Transverse colon (tissue), 4 donors: ENCODE measurements at regions of chr19 and their contacts with region 1.

Region 1: DNA sequence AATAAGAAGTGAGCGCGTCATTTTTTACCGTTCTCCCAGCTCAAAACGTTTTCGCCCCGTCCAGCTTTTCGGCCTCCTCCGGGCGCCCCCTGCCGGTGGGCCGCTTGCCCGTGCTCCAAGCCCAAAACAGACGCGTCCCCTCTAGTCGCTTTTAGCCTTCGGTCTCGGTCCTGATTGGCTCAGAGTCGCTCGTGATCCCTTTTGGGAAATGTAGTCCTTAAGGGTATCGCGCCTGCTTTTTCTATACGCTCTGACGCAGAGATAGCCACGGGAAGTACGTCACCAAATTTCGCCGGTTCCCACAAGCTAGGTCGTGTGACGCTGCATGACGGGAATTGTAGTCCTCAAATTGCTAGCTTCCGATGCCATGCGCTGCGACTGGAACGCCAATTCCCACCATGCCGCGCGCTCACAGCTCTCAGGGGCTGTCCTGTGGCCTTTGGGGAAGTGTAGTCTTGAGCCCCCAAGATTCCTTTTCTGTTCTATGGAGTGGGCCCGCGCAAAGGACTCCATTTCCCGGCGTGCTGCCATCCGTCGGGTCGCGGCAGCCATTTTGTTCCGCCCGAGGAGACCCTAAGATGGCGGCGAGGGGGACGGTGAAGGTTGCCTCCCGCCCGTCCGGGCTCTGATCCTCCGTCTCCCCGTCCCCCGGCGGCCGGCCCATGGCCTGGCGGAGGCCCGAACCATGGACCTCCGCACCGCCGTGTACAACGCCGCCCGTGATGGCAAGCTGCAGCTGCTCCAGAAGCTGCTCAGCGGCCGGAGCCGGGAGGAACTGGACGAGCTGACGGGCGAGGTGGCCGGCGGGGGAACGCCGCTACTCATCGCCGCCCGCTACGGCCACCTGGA is at the start of gene FEM1A:
- DNase-seq: peak; percentile 100
- H3K4me3 ChIP-seq: peak within 1 kb of the TSS; percentile 63 to 89 (median 85)
- H3K27ac ChIP-seq: peak within 1 kb of the TSS; percentile 84 to 94 (median 94)
- H3K4me1 ChIP-seq: peaks cover 13 to 39% (median 21%) of the 10 kb centered on the region in 4 donors
- H3K27me3 ChIP-seq: no peaks in the 10 kb centered on the region
- CTCF ChIP-seq: peak; percentile 97 to 100 (median 98)
- EP300 ChIP-seq: peak; percentile 91
- POLR2A ChIP-seq: peak; percentile 73
- total RNA-seq, gene FEM1A: 13.3 to 63.5 (median 15.5) TPM

Region 2: DNA sequence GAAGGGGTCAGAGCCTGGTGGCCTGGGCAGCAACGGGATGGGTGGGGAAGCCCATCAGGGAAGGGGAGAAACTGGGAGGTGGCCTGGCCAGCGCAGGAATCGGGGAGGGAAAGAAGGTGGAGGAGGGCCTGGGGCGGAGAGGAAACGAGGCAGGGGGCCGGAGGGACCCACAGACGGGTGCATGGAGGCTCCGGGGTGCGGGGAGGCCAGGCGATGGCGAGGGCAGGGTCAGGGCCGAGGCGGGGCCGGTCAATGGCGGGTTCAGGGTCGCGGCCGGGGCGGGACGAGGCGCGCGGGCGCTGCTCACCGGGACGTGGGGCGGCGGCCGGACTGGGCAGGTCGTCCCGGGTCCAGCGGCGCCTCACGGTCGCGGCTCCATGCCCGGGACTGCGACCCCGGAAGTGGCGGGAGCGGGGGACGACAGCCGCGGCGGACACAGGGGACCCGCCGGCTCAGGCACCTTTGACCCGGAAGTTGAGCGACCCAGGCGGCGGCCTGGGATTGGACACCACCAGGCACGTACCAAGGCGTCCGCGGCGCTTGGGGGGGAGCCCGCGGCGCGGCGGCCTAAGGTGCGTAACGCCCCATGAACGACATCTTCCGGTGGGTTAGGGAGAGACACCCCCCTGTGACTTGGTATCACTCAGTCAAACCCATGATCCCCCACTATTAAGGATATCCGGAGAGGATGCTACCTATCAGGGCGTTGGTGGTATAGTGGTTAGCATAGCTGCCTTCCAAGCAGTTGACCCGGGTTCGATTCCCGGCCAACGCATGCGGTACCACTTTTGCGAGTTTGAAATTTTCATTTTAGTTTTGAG is 67.8 kb before region 1 on chr19 and contains the start of gene DPP9:
- in situ Hi-C with region 1: loop called in 1 of 4 experiments (anchors 10 kb)
- intact Hi-C with region 1: no loop called
- DNase-seq: peak; percentile 97
- H3K4me3 ChIP-seq: peak within 1 kb of the TSS; percentile 93 to 99 (median 96)
- H3K27ac ChIP-seq: peak within 1 kb of the TSS; percentile 89 to 97 (median 94)
- H3K4me1 ChIP-seq: peaks cover 13 to 31% (median 20%) of the 10 kb centered on the region in 4 donors
- H3K27me3 ChIP-seq: no peaks in the 10 kb centered on the region
- CTCF ChIP-seq: peak in 4 of 5 experiments; percentile 21 to 71 (median 50)
- EP300 ChIP-seq: no peak
- POLR2A ChIP-seq: peak; percentile 52
- total RNA-seq, gene DPP9: 74.1 to 320 (median 103) TPM